ENCODE measurements at regions of chr5 and their contacts with region 1.

Region 1: GRCh38 chr5:173581408-173582215 is 34.8 kb downstream of the BOD1 start:
- DNase-seq: no peak
- H3K4me3 ChIP-seq: no peak overlapping the region
- H3K27ac ChIP-seq: no peak overlapping the region
- H3K27me3 ChIP-seq: no peaks in the 10 kb centered on the region
- CTCF ChIP-seq: peak; percentile 82

Region 2: GRCh38 chr5:173498286-173498685 is 83.3 kb before region 1 on chr5:
- CTCF ChIA-PET with region 1: no interaction called
- POLR2A ChIA-PET with region 1: no interaction called
- DNase-seq: no peak
- H3K4me3 ChIP-seq: no peak overlapping the region
- H3K27ac ChIP-seq: peak overlapping the region; percentile 34
- H3K27me3 ChIP-seq: no peaks in the 10 kb centered on the region
- CTCF ChIP-seq: no peak

Region 3: GRCh38 chr5:173592050-173592669 is 10.5 kb after region 1 on chr5:
- CTCF ChIA-PET with region 1: interaction called, 11 read pairs
- POLR2A ChIA-PET with region 1: no interaction called
- DNase-seq: no peak
- H3K4me3 ChIP-seq: no peak overlapping the region
- H3K27ac ChIP-seq: no peak overlapping the region
- H3K27me3 ChIP-seq: peaks cover 2% of the 10 kb centered on the region
- CTCF ChIP-seq: peak; percentile 46